Tibial artery (tissue), 4 donors: ENCODE measurements at regions of chr7 and their contacts with region 1.

Region 1: GRCh38 chr7:74505471-74506324 is 52.0 kb downstream of the GTF2IRD1 start:
- DNase-seq: no peak
- H3K4me3 ChIP-seq: no peak overlapping the region
- H3K27ac ChIP-seq: no peak overlapping the region
- H3K4me1 ChIP-seq: peaks cover 0 to 26% (median 20%) of the 10 kb centered on the region in 4 donors
- H3K27me3 ChIP-seq: no peaks in the 10 kb centered on the region
- CTCF ChIP-seq: no peak

Region 2: GRCh38 chr7:74569501-74570075 is 63.9 kb after region 1 on chr7:
- intact Hi-C with region 1: loop called (anchors 5 kb)
- DNase-seq: no peak
- H3K4me3 ChIP-seq: no peak overlapping the region
- H3K27ac ChIP-seq: no peak overlapping the region
- H3K4me1 ChIP-seq: no peaks in the 10 kb centered on the region
- H3K27me3 ChIP-seq: no peaks in the 10 kb centered on the region
- CTCF ChIP-seq: no peak